Naive thymus-derived CD4-positive, alpha-beta T cell (primary cell): ENCODE measurements at regions of chr7 and their contacts with region 1.

Region 1: GRCh38 chr7:90403174-90404113 is at the start of gene CLDN12:
- DNase-seq: peak; percentile 30 to 91 (median 75)
- ATAC-seq: peak; percentile 99
- H3K4me3 ChIP-seq: peak within 1 kb of the TSS; percentile 81
- H3K4me3 Mint-ChIP-seq: peak within 1 kb of the TSS; percentile 90 to 98 (median 94)
- H3K27ac ChIP-seq: peak within 1 kb of the TSS; percentile 73
- H3K27ac Mint-ChIP-seq: peak within 1 kb of the TSS; percentile 62 to 96 (median 94)
- H3K4me1 ChIP-seq: peaks cover 0 to 6% of the 10 kb centered on the region in 2 donors
- H3K4me1 Mint-ChIP-seq: peaks cover 0 to 24% (median 18%) of the 10 kb centered on the region in 7 donors
- H3K27me3 ChIP-seq: no peaks in the 10 kb centered on the region
- H3K27me3 Mint-ChIP-seq: peaks cover 0 to 18% (median 0%) of the 10 kb centered on the region in 5 donors
- total RNA-seq, gene CLDN12: 0.76 to 3.9 (median 2.0) TPM

Region 2: DNA sequence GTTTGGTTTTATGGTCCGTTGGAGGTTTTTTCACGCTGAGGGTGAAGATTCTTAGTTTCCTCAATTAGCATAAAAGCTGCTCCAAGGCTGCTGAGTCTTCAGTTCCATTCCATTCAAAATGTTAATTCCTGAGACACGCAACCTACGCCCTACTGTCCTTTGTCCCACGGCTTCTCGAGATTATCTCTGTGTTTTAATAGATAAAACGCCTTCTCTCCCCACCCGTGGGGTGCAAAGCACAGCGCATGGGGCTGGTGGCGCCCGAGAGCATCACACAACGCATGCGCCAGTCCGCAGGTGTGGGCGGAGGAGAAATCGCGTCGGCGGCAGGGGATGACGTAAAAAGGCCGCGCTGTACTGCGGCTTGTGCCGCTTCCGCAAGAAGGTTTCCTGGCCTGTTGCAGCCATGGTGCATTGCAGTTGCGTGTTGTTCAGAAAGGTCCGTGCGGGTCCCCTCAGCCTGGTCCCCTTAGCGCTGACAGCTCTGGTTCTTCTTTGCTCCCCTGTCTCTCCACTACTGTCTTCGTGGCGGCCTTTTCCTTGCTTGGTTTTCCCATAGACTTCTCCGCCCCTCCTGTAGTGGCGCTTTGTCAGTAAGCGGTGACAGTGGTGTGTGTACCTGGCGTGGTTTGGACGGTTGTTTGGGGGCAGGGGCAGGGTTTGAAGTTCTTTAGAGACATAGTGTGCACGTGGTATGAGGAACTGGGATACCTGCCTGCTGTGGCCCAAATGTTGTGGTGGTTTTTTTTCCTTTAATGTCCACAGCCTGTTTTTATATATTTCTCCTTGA is 56.9 kb before region 1 on chr7 and contains the start of gene GTPBP10:
- CTCF ChIA-PET with region 1: no interaction called
- POLR2A ChIA-PET with region 1: no interaction called
- intact Hi-C with region 1: loop called (anchors 1 kb)
- DNase-seq: peak; percentile 88 to 96 (median 94)
- ATAC-seq: peak; percentile 99
- H3K4me3 ChIP-seq: peak within 1 kb of the TSS; percentile 83
- H3K4me3 Mint-ChIP-seq: peak within 1 kb of the TSS; percentile 93 to 99 (median 98)
- H3K27ac ChIP-seq: peak within 1 kb of the TSS; percentile 95
- H3K27ac Mint-ChIP-seq: peak within 1 kb of the TSS; percentile 96 to 100 (median 99)
- H3K4me1 ChIP-seq: peaks cover 13 to 26% of the 10 kb centered on the region in 2 donors
- H3K4me1 Mint-ChIP-seq: peaks cover 23 to 65% (median 53%) of the 10 kb centered on the region in 7 donors
- H3K27me3 ChIP-seq: no peaks in the 10 kb centered on the region
- H3K27me3 Mint-ChIP-seq: peaks cover 0 to 2% (median 0%) of the 10 kb centered on the region in 5 donors
- total RNA-seq, gene GTPBP10: 21.5 to 51.4 (median 29.8) TPM

Region 3: DNA sequence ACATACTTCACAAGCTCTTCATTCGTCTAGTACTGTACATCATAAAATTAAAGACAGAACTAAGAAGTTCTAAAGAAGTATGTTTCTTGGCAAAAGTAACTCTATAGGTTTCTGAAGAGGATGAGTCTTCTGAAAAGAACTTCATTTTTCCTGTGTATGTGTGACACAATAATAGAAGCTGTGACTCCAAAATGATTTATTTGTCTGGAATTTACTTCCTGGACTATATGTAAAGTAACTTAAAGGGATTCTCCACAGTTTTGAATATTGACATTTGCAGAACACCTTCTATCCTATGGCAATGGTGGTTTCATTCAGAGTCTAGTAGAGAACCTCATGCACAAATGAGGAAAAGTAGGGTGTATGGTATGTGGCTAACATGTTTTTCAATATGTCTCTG is 20.0 kb before region 1 on chr7:
- CTCF ChIA-PET with region 1: no interaction called
- POLR2A ChIA-PET with region 1: no interaction called
- intact Hi-C with region 1: loop called in 1 of 2 experiments (anchors 2 kb)
- DNase-seq: no peak
- ATAC-seq: no peak
- H3K4me3 ChIP-seq: no peak overlapping the region
- H3K4me3 Mint-ChIP-seq: no peak overlapping the region
- H3K27ac ChIP-seq: no peak overlapping the region
- H3K27ac Mint-ChIP-seq: no peak overlapping the region
- H3K4me1 ChIP-seq: no peaks in the 10 kb centered on the region
- H3K4me1 Mint-ChIP-seq: peaks cover 0 to 6% (median 0%) of the 10 kb centered on the region in 7 donors
- H3K27me3 ChIP-seq: no peaks in the 10 kb centered on the region
- H3K27me3 Mint-ChIP-seq: no peaks in the 10 kb centered on the region